Endothelial cell of umbilical vein (primary cell): ENCODE measurements at regions of chrX and their contacts with region 1.

Region 1: DNA sequence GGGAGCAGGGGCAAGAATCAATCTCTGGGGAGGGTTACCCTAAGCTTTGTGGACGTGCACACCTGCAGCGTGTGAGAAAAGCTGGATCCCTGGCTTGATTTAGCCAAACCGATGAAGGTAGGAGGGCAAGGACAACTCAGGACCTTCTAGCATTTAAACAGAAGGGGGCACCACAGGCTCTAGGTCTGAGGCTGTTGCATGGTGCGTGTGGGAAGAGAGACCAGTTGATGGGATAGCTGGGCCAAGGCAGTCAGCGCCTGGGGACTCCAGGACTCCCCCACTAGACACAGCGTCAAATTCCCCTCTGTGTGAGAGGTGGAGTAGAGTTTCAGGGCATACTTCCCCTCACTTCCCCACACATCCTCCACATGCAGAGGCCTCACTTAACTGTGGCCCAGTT is 4.3 kb downstream of the GABRQ start:
- DNase-seq: peak; percentile 1
- H3K4me3 ChIP-seq: no peak overlapping the region
- H3K27ac ChIP-seq: no peak overlapping the region
- H3K4me1 ChIP-seq: no peaks in the 10 kb centered on the region
- H3K27me3 ChIP-seq: peaks cover 4 to 9% of the 10 kb centered on the region in 2 experiments
- CTCF ChIP-seq: peak in 1 of 2 donors; percentile 4
- POLR2A ChIP-seq: no peak

Region 2: GRCh38 chrX:152619897-152620296 is 22.1 kb before region 1 on chrX:
- CTCF ChIA-PET with region 1: no interaction called
- POLR2A ChIA-PET with region 1: no interaction called
- dilution Hi-C with region 1: no loop called
- intact Hi-C with region 1: no loop called
- DNase-seq: no peak
- H3K4me3 ChIP-seq: no peak overlapping the region
- H3K27ac ChIP-seq: no peak overlapping the region
- H3K4me1 ChIP-seq: no peaks in the 10 kb centered on the region
- H3K27me3 ChIP-seq: no peaks in the 10 kb centered on the region
- CTCF ChIP-seq: no peak
- POLR2A ChIP-seq: no peak

Region 3: GRCh38 chrX:152821145-152821765 is 179.3 kb after region 1 on chrX:
- CTCF ChIA-PET with region 1: interaction called, 37 read pairs
- POLR2A ChIA-PET with region 1: no interaction called
- dilution Hi-C with region 1: no loop called
- intact Hi-C with region 1: loop called (anchors 2 kb)
- DNase-seq: peak; percentile 31
- H3K4me3 ChIP-seq: no peak overlapping the region
- H3K27ac ChIP-seq: no peak overlapping the region
- H3K4me1 ChIP-seq: peaks cover 4% of the 10 kb centered on the region
- H3K27me3 ChIP-seq: peaks cover 1 to 3% of the 10 kb centered on the region in 2 experiments
- CTCF ChIP-seq: peak; percentile 51 to 59
- POLR2A ChIP-seq: no peak

Region 4: GRCh38 chrX:152926279-152926678 is 284.3 kb after region 1 on chrX:
- CTCF ChIA-PET with region 1: interaction called, 10 read pairs
- POLR2A ChIA-PET with region 1: no interaction called
- dilution Hi-C with region 1: no loop called
- intact Hi-C with region 1: no loop called
- DNase-seq: peak; percentile 72
- H3K4me3 ChIP-seq: no peak overlapping the region
- H3K27ac ChIP-seq: no peak overlapping the region
- H3K4me1 ChIP-seq: peaks cover 2% of the 10 kb centered on the region
- H3K27me3 ChIP-seq: no peaks in the 10 kb centered on the region
- CTCF ChIP-seq: peak; percentile 38 to 39
- POLR2A ChIP-seq: no peak